GM18951 (cell line): ENCODE measurements at regions of chr3 and their contacts with region 1.

Region 1: GRCh38 chr3:195001961-195002861 is 268.7 kb downstream of the XXYLT1 start:
- POLR2A ChIP-seq: no peak

Region 2: DNA sequence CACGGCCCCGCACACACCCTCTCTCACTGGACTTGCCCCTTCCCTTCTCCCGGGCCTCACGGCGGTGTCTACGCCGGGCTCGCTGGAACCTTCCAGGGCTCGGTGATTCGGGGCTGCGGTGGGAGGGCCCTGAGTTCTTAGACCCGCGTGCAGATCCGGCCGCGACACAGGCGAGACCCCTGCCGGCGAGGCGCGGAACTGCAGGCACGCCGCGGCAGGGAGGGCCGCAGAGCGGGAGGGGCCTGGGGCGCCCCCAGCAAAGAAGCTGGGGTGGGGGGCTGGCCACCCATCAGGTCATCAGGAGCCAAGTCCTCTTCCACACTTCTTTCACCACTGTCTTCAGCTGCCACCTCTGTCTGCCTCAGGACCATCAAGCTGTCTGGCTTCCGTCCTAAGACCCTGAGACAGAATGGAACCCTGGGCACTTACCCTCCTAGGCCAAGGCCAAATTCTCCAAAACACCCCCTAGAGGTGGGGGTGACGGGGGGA is 104.3 kb after region 1 on chr3:
- in situ Hi-C with region 1: loop called (anchors 5 kb)
- POLR2A ChIP-seq: no peak

Region 3: DNA sequence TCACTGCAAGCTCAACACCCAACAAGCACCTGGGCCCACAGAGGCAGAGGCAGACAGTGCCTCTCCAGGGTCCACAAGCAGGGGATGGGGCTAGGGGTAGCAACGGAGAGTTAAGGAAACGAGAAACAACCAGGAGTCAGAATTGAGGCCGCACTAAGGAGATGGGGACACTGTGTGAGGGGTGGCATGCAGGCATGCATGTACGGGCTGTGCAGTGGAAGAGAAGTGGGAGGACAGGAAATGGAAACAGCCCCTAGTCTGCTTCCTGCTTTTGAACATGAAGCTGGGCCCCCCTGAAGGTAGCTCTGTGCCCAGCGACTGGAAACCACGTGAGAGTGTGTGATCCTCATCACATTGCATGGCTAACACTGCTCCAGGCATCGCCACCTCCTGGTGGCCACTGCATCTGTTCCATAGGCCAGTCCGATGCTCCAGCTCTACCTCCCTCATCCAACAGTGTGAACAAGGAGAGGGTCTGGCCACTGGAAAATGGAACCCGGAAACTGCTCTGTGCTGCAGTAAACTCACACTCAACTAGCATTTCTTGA is 224.8 kb after region 1 on chr3:
- in situ Hi-C with region 1: loop called (anchors 25 kb)
- POLR2A ChIP-seq: no peak